ENCODE measurements at regions of chr19 and their contacts with region 1.

Region 1: GRCh38 chr19:42325273-42325895 is at the start of gene MEGF8:
- DNase-seq: peak; percentile 98
- H3K4me3 Mint-ChIP-seq: peak within 1 kb of the TSS; percentile 90
- H3K27ac Mint-ChIP-seq: peak within 1 kb of the TSS; percentile 53
- H3K4me1 Mint-ChIP-seq: peaks cover 15% of the 10 kb centered on the region
- H3K27me3 Mint-ChIP-seq: peaks cover 32% of the 10 kb centered on the region
- total RNA-seq, gene MEGF8: 7.5 and 7.8 TPM in 2 replicates

Region 2: GRCh38 chr19:42075616-42076379 is 249.6 kb before region 1 on chr19 and contains the start of gene ZNF574:
- intact Hi-C with region 1: no loop called
- DNase-seq: peak; percentile 97
- H3K4me3 Mint-ChIP-seq: peak within 1 kb of the TSS; percentile 97
- H3K27ac Mint-ChIP-seq: peak within 1 kb of the TSS; percentile 99
- H3K4me1 Mint-ChIP-seq: peaks cover 37% of the 10 kb centered on the region
- H3K27me3 Mint-ChIP-seq: peaks cover 1% of the 10 kb centered on the region
- total RNA-seq, gene ZNF574: 17.5 and 17.8 TPM in 2 replicates

Region 3: DNA sequence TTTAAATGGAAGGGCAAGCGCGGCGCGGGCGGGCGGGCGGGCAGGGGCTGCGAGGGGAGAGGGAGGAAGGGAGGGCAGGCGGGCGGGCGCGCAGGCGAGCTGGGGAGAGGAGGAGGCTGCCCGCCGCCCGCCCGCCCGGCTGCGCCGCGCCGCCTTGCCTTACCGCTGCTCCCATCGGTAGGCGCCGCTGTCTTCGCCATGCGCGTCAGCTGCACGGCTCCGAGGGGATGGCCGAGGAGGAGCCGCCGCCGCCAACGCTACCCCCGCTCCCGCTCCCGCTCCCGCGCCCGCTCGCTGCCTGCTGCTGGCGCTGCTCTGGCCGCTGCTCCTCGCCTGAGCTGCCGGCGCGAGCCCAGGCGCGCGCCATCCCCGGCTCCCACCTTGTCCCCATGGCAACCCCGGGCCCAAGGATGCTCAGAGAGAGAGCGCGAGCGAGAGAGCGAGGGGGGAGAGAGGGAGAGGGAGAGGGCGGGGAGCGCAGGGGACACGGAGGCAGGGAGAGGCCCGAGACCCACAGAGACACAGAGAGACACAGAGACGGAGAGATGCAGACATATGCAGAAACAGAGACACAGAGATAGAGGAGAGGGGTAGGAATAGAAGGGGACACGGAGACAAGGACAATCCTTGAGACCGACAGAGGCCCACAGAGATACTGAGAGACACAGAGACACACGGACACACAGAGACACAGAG is 148.2 kb before region 1 on chr19:
- intact Hi-C with region 1: loop called (anchors 1 kb)
- DNase-seq: peak; percentile 71
- H3K4me3 Mint-ChIP-seq: no peak overlapping the region
- H3K27ac Mint-ChIP-seq: no peak overlapping the region
- H3K4me1 Mint-ChIP-seq: peaks cover 19% of the 10 kb centered on the region
- H3K27me3 Mint-ChIP-seq: peaks cover 38% of the 10 kb centered on the region

Region 4: GRCh38 chr19:42254989-42255765 is 70.2 kb before region 1 on chr19 and contains the start of gene ERF:
- intact Hi-C with region 1: loop called (anchors 1 kb)
- DNase-seq: peak; percentile 92
- H3K4me3 Mint-ChIP-seq: peak within 1 kb of the TSS; percentile 74
- H3K27ac Mint-ChIP-seq: peak within 1 kb of the TSS; percentile 65
- H3K4me1 Mint-ChIP-seq: peaks cover 19% of the 10 kb centered on the region
- H3K27me3 Mint-ChIP-seq: peaks cover 9% of the 10 kb centered on the region
- total RNA-seq, gene ERF: 71.9 and 78.4 TPM in 2 replicates

Region 5: DNA sequence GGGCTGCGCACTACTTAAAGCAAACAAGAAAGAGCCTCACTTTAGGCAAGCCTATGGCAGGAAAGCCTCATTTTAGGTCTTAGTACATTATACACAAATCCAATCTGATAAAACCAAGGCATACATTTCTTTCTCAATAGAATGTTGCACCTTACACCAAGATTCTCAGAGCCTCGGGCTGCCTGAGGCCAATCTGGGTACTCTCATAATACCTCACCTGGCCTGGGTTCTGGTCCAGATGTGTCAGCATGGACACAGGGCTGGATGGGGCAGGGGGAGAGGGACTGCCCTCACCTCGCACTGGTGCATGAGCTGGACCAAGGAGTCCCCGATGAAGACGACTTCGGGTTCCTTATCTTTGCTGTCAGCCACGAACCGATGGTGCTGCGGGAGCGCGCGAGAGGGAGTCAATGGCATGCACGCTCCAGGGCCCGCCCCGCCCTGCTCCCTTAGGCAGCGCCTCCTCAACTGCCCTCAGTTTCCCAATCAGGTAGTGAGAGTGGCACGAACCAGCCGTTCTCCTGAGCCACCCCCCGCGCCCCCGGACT is 23.7 kb before region 1 on chr19 and contains the start of gene PRR19:
- intact Hi-C with region 1: loop called (anchors 1 kb)
- DNase-seq: no peak
- H3K4me3 Mint-ChIP-seq: peak within 1 kb of the TSS; percentile 88
- H3K27ac Mint-ChIP-seq: peak within 1 kb of the TSS; percentile 89
- H3K4me1 Mint-ChIP-seq: peaks cover 14% of the 10 kb centered on the region
- H3K27me3 Mint-ChIP-seq: peaks cover 2% of the 10 kb centered on the region
- total RNA-seq, gene PRR19: 1.0 and 1.4 TPM in 2 replicates

Region 6: DNA sequence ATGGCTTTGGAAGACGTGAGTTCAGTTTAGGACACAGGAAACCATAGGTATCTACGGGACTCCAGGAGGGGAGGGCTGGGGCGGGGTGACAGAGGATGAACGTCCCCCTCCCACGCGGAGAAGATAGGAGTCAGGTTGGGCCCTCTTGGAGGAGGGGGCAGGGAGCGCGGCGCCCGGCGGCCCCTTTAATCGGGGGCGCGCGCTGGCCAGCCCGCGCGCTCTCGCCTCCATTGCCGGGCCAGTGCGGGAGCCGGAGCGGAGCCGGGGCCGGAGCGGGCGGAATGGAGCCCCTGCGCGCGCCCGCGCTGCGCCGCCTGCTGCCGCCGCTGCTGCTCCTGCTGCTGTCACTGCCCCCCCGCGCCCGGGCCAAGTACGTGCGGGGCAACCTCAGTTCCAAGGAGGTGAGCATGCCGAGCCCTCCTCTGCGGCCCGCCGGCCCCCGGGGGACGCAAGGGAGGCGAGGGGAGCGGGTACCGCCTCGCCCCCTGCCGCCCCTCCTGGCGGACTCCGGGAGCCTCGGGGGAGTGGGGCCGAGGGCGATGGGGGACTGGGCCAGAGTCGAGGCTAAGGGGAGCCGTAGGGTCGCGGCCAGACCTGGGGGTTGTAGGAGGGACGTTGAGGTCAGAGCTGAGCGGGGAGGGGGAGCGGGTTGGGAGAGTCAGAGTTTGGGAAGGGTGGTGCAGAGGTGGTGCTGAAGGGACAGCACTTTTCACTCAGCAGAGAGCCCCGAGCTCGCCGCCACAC is 12.1 kb before region 1 on chr19 and contains the start of gene TMEM145:
- intact Hi-C with region 1: loop called (anchors 1 kb)
- DNase-seq: peak; percentile 35
- H3K4me3 Mint-ChIP-seq: peak within 1 kb of the TSS; percentile 79
- H3K27ac Mint-ChIP-seq: no peak within 1 kb of the TSS
- H3K4me1 Mint-ChIP-seq: peaks cover 7% of the 10 kb centered on the region
- H3K27me3 Mint-ChIP-seq: peaks cover 44% of the 10 kb centered on the region
- total RNA-seq, gene TMEM145: 0.56 and 2.1 TPM in 2 replicates

Region 7: GRCh38 chr19:42396381-42397262 is 71.2 kb after region 1 on chr19:
- intact Hi-C with region 1: loop called (anchors 1 kb)
- DNase-seq: peak; percentile 97
- H3K4me3 Mint-ChIP-seq: peak overlapping the region; percentile 89
- H3K27ac Mint-ChIP-seq: peak overlapping the region; percentile 93
- H3K4me1 Mint-ChIP-seq: peaks cover 34% of the 10 kb centered on the region
- H3K27me3 Mint-ChIP-seq: peaks cover 5% of the 10 kb centered on the region